ENCODE measurements at regions of chr19 and their contacts with region 1.

Region 1: GRCh38 chr19:5680437-5681368 is at the starts of genes HSD11B1L and MICOS13:
- DNase-seq: peak; percentile 99
- H3K4me3 ChIP-seq: peak within 1 kb of the TSS; percentile 82 to 98 (median 86)
- H3K27ac ChIP-seq: peak within 1 kb of the TSS; percentile 90 to 96 (median 93)
- H3K4me1 ChIP-seq: peaks cover 19 to 33% (median 27%) of the 10 kb centered on the region in 4 donors
- H3K27me3 ChIP-seq: no peaks in the 10 kb centered on the region
- CTCF ChIP-seq: peak in 1 of 3 experiments; percentile 17
- EP300 ChIP-seq: no peak
- POLR2A ChIP-seq: no peak
- total RNA-seq, gene HSD11B1L: 15.0 to 21.8 (median 17.8) TPM
- total RNA-seq, gene MICOS13: 46.4 to 70.0 (median 59.3) TPM

Region 2: GRCh38 chr19:5585461-5586299 is 95.0 kb before region 1 on chr19:
- intact Hi-C with region 1: no loop called
- DNase-seq: no peak
- H3K4me3 ChIP-seq: peak overlapping the region in 1 of 4 donors; percentile 9
- H3K27ac ChIP-seq: peak overlapping the region; percentile 65 to 83 (median 74)
- H3K4me1 ChIP-seq: peaks cover 16 to 19% (median 19%) of the 10 kb centered on the region in 4 donors
- H3K27me3 ChIP-seq: no peaks in the 10 kb centered on the region
- CTCF ChIP-seq: no peak
- EP300 ChIP-seq: no peak
- POLR2A ChIP-seq: no peak

Region 3: GRCh38 chr19:5622463-5623396 is 58.0 kb before region 1 on chr19 and contains the starts of genes SAFB and SAFB2:
- intact Hi-C with region 1: loop called (anchors 5 kb)
- DNase-seq: peak; percentile 99
- H3K4me3 ChIP-seq: peak within 1 kb of the TSS; percentile 85 to 98 (median 88)
- H3K27ac ChIP-seq: peak within 1 kb of the TSS; percentile 96 to 98 (median 96)
- H3K4me1 ChIP-seq: peaks cover 63 to 81% (median 76%) of the 10 kb centered on the region in 4 donors
- H3K27me3 ChIP-seq: no peaks in the 10 kb centered on the region
- CTCF ChIP-seq: peak in 1 of 3 experiments; percentile 8
- EP300 ChIP-seq: no peak
- POLR2A ChIP-seq: peak; percentile 97
- total RNA-seq, gene SAFB: 48.4 to 96.2 (median 75.7) TPM
- total RNA-seq, gene SAFB2: 31.1 to 57.8 (median 42.7) TPM

Region 4: GRCh38 chr19:6021878-6022569 is 341.3 kb after region 1 on chr19:
- intact Hi-C with region 1: no loop called
- DNase-seq: peak; percentile 94
- H3K4me3 ChIP-seq: no peak overlapping the region
- H3K27ac ChIP-seq: peak overlapping the region; percentile 58 to 72 (median 68)
- H3K4me1 ChIP-seq: peaks cover 4 to 31% (median 21%) of the 10 kb centered on the region in 4 donors
- H3K27me3 ChIP-seq: no peaks in the 10 kb centered on the region
- CTCF ChIP-seq: peak; percentile 69 to 73 (median 70)
- EP300 ChIP-seq: no peak
- POLR2A ChIP-seq: no peak